CD8-positive, alpha-beta T cell (primary cell): ENCODE measurements at regions of chr5 and their contacts with region 1.

Region 1: DNA sequence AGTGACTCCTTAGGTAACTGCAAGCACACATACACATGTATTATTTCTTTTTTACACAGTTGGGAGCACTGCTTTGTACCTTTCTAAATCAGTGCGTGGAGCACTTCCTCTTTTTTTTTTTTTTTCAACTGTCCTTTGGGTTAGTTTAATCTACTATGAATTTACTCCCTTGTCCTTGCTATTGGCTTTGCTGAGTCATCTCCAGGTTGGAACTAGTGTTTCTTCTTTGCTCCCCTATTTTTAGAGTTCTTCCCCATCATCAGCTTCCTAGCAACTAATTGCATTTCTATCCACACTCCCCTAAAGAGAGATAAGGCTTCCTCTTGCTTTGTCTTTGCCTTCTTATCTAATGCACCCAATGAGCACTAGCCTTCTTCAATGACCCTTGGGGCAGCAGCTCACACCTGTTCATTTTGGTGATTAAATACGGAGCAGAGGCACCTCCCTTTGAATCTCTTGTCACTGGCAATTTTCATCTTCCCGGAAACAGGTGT is 24.3 kb downstream of the S100Z start:
- DNase-seq: no peak
- ATAC-seq: no peak
- H3K4me3 ChIP-seq: no peak overlapping the region
- H3K4me3 Mint-ChIP-seq: no peak overlapping the region
- H3K27ac ChIP-seq: no peak overlapping the region
- H3K27ac Mint-ChIP-seq: no peak overlapping the region
- H3K4me1 ChIP-seq: no peaks in the 10 kb centered on the region
- H3K4me1 Mint-ChIP-seq: no peaks in the 10 kb centered on the region
- H3K27me3 ChIP-seq: peaks cover 0 to 2% of the 10 kb centered on the region in 2 experiments
- H3K27me3 Mint-ChIP-seq: no peaks in the 10 kb centered on the region
- CTCF ChIP-seq: no peak

Region 2: GRCh38 chr5:76816110-76816831 is 57.9 kb before region 1 on chr5:
- CTCF ChIA-PET with region 1: no interaction called
- POLR2A ChIA-PET with region 1: no interaction called
- intact Hi-C with region 1: no loop called
- DNase-seq: no peak
- ATAC-seq: no peak
- H3K4me3 ChIP-seq: no peak overlapping the region
- H3K4me3 Mint-ChIP-seq: no peak overlapping the region
- H3K27ac ChIP-seq: no peak overlapping the region
- H3K27ac Mint-ChIP-seq: no peak overlapping the region
- H3K4me1 ChIP-seq: peaks cover 4% of the 10 kb centered on the region
- H3K4me1 Mint-ChIP-seq: peaks cover 16% of the 10 kb centered on the region
- H3K27me3 ChIP-seq: peaks cover 0 to 11% of the 10 kb centered on the region in 2 experiments
- H3K27me3 Mint-ChIP-seq: peaks cover 24% of the 10 kb centered on the region
- CTCF ChIP-seq: no peak

Region 3: GRCh38 chr5:77046416-77047073 is 172.4 kb after region 1 on chr5:
- CTCF ChIA-PET with region 1: no interaction called
- POLR2A ChIA-PET with region 1: no interaction called
- intact Hi-C with region 1: no loop called
- DNase-seq: no peak
- ATAC-seq: no peak
- H3K4me3 ChIP-seq: no peak overlapping the region
- H3K4me3 Mint-ChIP-seq: no peak overlapping the region
- H3K27ac ChIP-seq: no peak overlapping the region
- H3K27ac Mint-ChIP-seq: no peak overlapping the region
- H3K4me1 ChIP-seq: no peaks in the 10 kb centered on the region
- H3K4me1 Mint-ChIP-seq: peaks cover 4% of the 10 kb centered on the region
- H3K27me3 ChIP-seq: no peaks in the 10 kb centered on the region
- H3K27me3 Mint-ChIP-seq: no peaks in the 10 kb centered on the region
- CTCF ChIP-seq: no peak

Region 4: DNA sequence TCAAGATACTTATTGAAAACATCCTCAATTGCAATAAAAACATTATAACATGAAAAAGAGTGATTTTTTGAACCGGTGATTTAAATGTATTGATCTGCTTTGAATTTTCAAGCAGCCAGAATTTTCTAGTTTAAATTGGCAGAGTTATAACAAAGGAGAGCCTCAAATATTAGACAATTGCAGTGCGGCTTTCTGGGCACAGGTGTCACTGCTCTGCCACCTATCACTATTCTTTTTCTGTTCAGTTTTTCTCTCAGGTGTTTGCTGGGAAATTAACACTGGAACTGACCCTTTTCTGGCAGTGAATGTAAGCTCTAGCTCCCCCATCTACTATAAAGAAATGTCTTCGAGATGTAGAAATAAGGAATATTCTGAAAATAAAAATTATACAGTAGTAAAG is 189.9 kb after region 1 on chr5:
- CTCF ChIA-PET with region 1: no interaction called
- POLR2A ChIA-PET with region 1: no interaction called
- intact Hi-C with region 1: no loop called
- DNase-seq: no peak
- ATAC-seq: no peak
- H3K4me3 ChIP-seq: no peak overlapping the region
- H3K4me3 Mint-ChIP-seq: no peak overlapping the region
- H3K27ac ChIP-seq: no peak overlapping the region
- H3K27ac Mint-ChIP-seq: no peak overlapping the region
- H3K4me1 ChIP-seq: no peaks in the 10 kb centered on the region
- H3K4me1 Mint-ChIP-seq: peaks cover 11% of the 10 kb centered on the region
- H3K27me3 ChIP-seq: no peaks in the 10 kb centered on the region
- H3K27me3 Mint-ChIP-seq: no peaks in the 10 kb centered on the region
- CTCF ChIP-seq: no peak

Region 5: GRCh38 chr5:77076961-77077823 is 203.1 kb after region 1 on chr5:
- CTCF ChIA-PET with region 1: interaction called, 3 read pairs
- POLR2A ChIA-PET with region 1: no interaction called
- intact Hi-C with region 1: loop called (anchors 5 kb)
- DNase-seq: peak in 8 of 9 experiments; percentile 29 to 69 (median 54)
- ATAC-seq: peak; percentile 75
- H3K4me3 ChIP-seq: peak overlapping the region; percentile 3 to 39
- H3K4me3 Mint-ChIP-seq: peak overlapping the region; percentile 72
- H3K27ac ChIP-seq: no peak overlapping the region
- H3K27ac Mint-ChIP-seq: no peak overlapping the region
- H3K4me1 ChIP-seq: no peaks in the 10 kb centered on the region
- H3K4me1 Mint-ChIP-seq: peaks cover 12% of the 10 kb centered on the region
- H3K27me3 ChIP-seq: no peaks in the 10 kb centered on the region
- H3K27me3 Mint-ChIP-seq: no peaks in the 10 kb centered on the region
- CTCF ChIP-seq: peak; percentile 70